Heart right ventricle (tissue), 16 donors: ENCODE measurements at regions of chr5 and their contacts with region 1.

Region 1: GRCh38 chr5:65760504-65761275 is 38.7 kb downstream of the NLN start:
- DNase-seq: peak; percentile 13 to 56
- ATAC-seq: peak; percentile 78 to 97 (median 92)
- H3K4me3 ChIP-seq: no peak overlapping the region
- H3K27ac ChIP-seq: peak overlapping the region in 2 of 10 donors; percentile 13 to 61
- H3K4me1 ChIP-seq: peaks cover 0 to 13% (median 4%) of the 10 kb centered on the region in 9 donors
- H3K27me3 ChIP-seq: no peaks in the 10 kb centered on the region
- CTCF ChIP-seq: peak in 7 of 9 donors; percentile 14 to 70 (median 52)

Region 2: GRCh38 chr5:66144074-66144833 is 383.6 kb after region 1 on chr5 and contains the start of gene SREK1:
- intact Hi-C with region 1: loop called in 1 of 10 experiments (anchors 2 kb)
- DNase-seq: peak; percentile 91 to 93
- ATAC-seq: peak; percentile 95 to 99 (median 97)
- H3K4me3 ChIP-seq: peak within 1 kb of the TSS; percentile 58 to 94 (median 82)
- H3K27ac ChIP-seq: peak within 1 kb of the TSS; percentile 92 to 100 (median 98)
- H3K4me1 ChIP-seq: peaks cover 0 to 50% (median 26%) of the 10 kb centered on the region in 9 donors
- H3K27me3 ChIP-seq: no peaks in the 10 kb centered on the region
- CTCF ChIP-seq: no peak
- total RNA-seq, gene SREK1: 23.4 to 33.6 (median 26.9) TPM